ENCODE measurements at regions of chr5 and their contacts with region 1.

Region 1: GRCh38 chr5:139104577-139105276 is 93.4 kb downstream of the SIL1 start:
- DNase-seq: peak in 1 of 2 donors; percentile 86
- H3K4me3 ChIP-seq: no peak overlapping the region
- H3K27ac ChIP-seq: peak overlapping the region in 4 of 5 donors; percentile 65 to 79 (median 69)
- H3K4me1 ChIP-seq: peaks cover 13 to 64% (median 37%) of the 10 kb centered on the region in 4 donors
- H3K27me3 ChIP-seq: no peaks in the 10 kb centered on the region
- CTCF ChIP-seq: no peak
- EP300 ChIP-seq: no peak
- POLR2A ChIP-seq: no peak

Region 2: DNA sequence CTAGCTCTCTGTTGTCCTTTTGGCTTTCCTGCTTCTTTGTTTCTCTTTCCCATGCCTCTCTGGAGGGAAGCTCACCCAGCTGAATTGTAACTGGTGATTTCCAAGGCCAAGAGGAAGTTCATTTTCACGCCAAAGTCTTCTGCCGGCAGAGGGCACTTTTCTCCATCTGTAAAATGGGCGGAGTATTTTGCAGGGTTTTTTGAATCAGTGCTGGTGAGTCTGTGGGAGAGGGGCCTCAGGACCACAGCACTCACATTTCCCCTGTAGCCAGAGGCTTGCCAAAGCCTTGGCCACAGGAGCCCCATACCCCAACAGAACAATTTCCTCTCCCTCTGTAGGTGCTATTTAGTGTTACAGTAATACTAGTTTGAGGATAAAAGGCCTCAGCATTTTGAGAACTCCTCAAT is 146.6 kb after region 1 on chr5:
- intact Hi-C with region 1: loop called (anchors 10 kb)
- DNase-seq: no peak
- H3K4me3 ChIP-seq: no peak overlapping the region
- H3K27ac ChIP-seq: no peak overlapping the region
- H3K4me1 ChIP-seq: peaks cover 0 to 6% (median 2%) of the 10 kb centered on the region in 4 donors
- H3K27me3 ChIP-seq: no peaks in the 10 kb centered on the region
- CTCF ChIP-seq: no peak
- EP300 ChIP-seq: no peak
- POLR2A ChIP-seq: no peak

Measured in stomach (tissue), 19 donors.